Right lobe of liver (tissue), 6 donors: ENCODE measurements at regions of chr3 and their contacts with region 1.

Region 1: GRCh38 chr3:51371943-51372557 is 13.0 kb upstream of the MANF start:
- DNase-seq: peak in 1 of 3 donors; percentile 61
- ATAC-seq: peak; percentile 67 to 85 (median 78)
- H3K4me3 ChIP-seq: no peak overlapping the region
- H3K27ac ChIP-seq: no peak overlapping the region
- H3K4me1 ChIP-seq: peaks cover 0 to 11% (median 0%) of the 10 kb centered on the region in 4 donors
- H3K27me3 ChIP-seq: no peaks in the 10 kb centered on the region
- CTCF ChIP-seq: peak; percentile 63 to 74 (median 70)
- POLR2A ChIP-seq: no peak

Region 2: DNA sequence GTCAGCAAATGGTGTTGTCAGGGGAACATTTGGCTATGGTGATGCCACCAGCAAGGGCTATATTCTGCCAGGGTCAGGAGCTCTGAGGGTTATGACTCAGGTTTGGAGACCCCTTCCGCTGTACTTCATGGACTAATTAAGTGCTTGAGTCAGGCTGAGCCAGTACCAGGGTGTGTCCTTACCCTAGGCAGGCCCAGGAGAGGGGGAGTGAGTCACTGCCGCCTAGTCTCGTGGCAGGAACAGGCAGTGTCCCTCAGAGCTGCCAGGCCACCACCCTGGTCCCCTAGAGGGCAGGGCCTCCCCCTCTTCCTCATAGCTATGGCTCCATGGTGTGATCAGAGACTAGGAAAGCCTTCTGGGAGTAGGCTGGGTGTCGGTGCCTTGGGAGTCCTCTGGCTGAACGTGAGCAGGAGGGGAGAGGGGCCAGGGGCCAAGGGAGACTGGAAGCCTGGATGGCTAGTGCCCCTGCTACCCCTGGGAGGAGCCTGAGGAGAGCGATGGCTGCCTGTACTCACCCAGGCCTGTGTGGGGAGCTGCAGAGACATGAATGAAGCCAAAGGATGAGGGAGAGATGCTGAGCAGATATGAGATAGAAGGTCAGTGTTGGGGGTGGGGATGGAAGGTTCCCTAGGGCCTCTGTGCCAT is 744.5 kb before region 1 on chr3:
- intact Hi-C with region 1: loop called in 1 of 2 experiments (anchors 10 kb)
- DNase-seq: no peak
- ATAC-seq: peak in 2 of 4 donors; percentile 28 to 65
- H3K4me3 ChIP-seq: no peak overlapping the region
- H3K27ac ChIP-seq: no peak overlapping the region
- H3K4me1 ChIP-seq: no peaks in the 10 kb centered on the region
- H3K27me3 ChIP-seq: no peaks in the 10 kb centered on the region
- CTCF ChIP-seq: no peak
- POLR2A ChIP-seq: no peak

Region 3: GRCh38 chr3:50961386-50961785 is 410.7 kb before region 1 on chr3:
- intact Hi-C with region 1: loop called in 1 of 2 experiments (anchors 10 kb)
- DNase-seq: no peak
- ATAC-seq: no peak
- H3K4me3 ChIP-seq: no peak overlapping the region
- H3K27ac ChIP-seq: no peak overlapping the region
- H3K4me1 ChIP-seq: no peaks in the 10 kb centered on the region
- H3K27me3 ChIP-seq: peaks cover 0 to 10% of the 10 kb centered on the region in 2 donors
- CTCF ChIP-seq: no peak
- POLR2A ChIP-seq: no peak